ENCODE measurements at regions of chr7 and their contacts with region 1.

Region 1: DNA sequence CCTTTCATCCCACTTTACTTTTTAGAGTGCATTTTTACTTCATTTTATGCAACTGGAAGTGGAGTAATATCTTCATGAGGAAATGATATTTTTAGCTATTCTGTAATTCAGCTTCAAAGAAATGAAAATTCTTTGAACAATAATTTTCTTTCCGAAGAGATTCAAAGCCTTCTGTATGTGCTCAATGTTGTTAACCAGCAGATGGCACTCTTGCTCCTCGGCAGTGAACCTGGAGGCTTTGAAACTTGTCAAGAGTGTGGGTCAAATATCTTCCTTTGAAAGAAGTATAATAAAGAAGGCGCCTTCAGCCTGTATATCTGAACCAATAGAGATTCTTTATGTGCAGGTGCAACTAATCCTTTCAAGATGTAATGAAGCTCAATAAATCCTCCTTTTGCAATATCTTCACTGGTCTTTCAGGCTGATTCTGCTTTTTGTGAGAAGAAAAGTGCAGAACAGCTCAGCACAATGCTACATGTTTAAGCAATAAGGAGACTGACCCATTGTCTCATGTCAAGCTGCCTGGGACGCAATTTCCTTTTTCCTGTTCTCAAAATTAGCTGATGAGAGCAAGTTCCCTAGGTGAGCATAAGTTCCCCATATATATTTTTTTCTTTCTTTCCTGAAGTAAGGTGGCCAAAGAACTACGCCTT is 258.4 kb downstream of the SEMA3A start:
- H3K4me3 ChIP-seq: no peak overlapping the region
- H3K27ac ChIP-seq: no peak overlapping the region
- H3K4me1 ChIP-seq: no peaks in the 10 kb centered on the region
- CTCF ChIP-seq: peak; percentile 38; the same call in 1 of the 2 replicates

Region 2: GRCh38 chr7:83947260-83947659 is 11.1 kb after region 1 on chr7:
- CTCF ChIA-PET with region 1: interaction called, 34 read pairs
- POLR2A ChIA-PET with region 1: no interaction called
- H3K4me3 ChIP-seq: no peak overlapping the region
- H3K27ac ChIP-seq: no peak overlapping the region
- H3K4me1 ChIP-seq: no peaks in the 10 kb centered on the region
- CTCF ChIP-seq: no peak

Region 3: GRCh38 chr7:84069036-84069435 is 132.9 kb after region 1 on chr7:
- CTCF ChIA-PET with region 1: no interaction called
- POLR2A ChIA-PET with region 1: no interaction called
- H3K4me3 ChIP-seq: no peak overlapping the region
- H3K27ac ChIP-seq: no peak overlapping the region
- H3K4me1 ChIP-seq: no peaks in the 10 kb centered on the region; the same call in 1 of the 2 replicates
- CTCF ChIP-seq: no peak

Region 4: DNA sequence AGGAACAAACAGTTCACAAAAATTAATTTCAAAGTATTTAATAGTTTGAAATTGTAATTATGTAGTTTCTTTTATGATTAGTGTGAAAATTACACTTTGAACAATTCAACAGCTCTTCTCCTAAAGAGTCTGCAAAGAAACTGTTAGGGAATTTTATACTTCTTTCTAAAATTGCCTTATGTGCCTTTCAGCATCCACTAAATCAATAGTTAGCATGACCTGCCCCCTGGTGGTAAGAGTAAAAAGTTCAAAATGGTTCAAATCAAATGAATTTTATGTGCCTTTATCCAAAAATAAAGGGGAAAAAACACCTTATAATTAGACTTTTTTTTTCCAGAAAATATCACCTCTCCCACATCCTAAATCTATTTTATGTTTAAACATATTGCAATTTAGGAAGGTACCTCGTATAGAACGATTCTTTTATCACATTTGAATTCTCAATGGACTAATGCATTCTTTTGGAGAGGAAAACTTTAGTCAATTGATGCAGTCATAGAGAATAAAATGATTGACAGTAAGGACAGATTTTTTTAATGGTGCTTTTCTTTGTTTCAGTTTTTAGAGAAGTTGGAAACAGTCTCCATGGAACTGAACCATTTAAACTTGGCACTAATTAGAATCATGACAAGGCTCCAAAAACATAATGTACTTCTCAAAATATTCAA is 1087.0 kb after region 1 on chr7:
- CTCF ChIA-PET with region 1: interaction called, 81 read pairs
- POLR2A ChIA-PET with region 1: no interaction called
- H3K4me3 ChIP-seq: no peak overlapping the region
- H3K27ac ChIP-seq: no peak overlapping the region
- H3K4me1 ChIP-seq: peaks cover 30% of the 10 kb centered on the region
- CTCF ChIP-seq: no peak

Measured in HEK293 (cell line).